G401 (cell line): ENCODE measurements at regions of chr12 and their contacts with region 1.

Region 1: GRCh38 chr12:89461649-89462612 is 62.7 kb downstream of the GALNT4 start:
- DNase-seq: peak; percentile 78

Region 2: GRCh38 chr12:89040146-89040964 is 421.6 kb before region 1 on chr12:
- in situ Hi-C with region 1: loop called (anchors 25 kb)
- DNase-seq: no peak

Region 3: GRCh38 chr12:89352492-89353187 is 109.3 kb before region 1 on chr12 and contains the start of gene DUSP6:
- in situ Hi-C with region 1: loop called (anchors 25 kb)
- DNase-seq: peak; percentile 91
- total RNA-seq, gene DUSP6: 233 and 289 TPM in 2 replicates